ENCODE measurements at regions of chrX and their contacts with region 1.

Region 1: DNA sequence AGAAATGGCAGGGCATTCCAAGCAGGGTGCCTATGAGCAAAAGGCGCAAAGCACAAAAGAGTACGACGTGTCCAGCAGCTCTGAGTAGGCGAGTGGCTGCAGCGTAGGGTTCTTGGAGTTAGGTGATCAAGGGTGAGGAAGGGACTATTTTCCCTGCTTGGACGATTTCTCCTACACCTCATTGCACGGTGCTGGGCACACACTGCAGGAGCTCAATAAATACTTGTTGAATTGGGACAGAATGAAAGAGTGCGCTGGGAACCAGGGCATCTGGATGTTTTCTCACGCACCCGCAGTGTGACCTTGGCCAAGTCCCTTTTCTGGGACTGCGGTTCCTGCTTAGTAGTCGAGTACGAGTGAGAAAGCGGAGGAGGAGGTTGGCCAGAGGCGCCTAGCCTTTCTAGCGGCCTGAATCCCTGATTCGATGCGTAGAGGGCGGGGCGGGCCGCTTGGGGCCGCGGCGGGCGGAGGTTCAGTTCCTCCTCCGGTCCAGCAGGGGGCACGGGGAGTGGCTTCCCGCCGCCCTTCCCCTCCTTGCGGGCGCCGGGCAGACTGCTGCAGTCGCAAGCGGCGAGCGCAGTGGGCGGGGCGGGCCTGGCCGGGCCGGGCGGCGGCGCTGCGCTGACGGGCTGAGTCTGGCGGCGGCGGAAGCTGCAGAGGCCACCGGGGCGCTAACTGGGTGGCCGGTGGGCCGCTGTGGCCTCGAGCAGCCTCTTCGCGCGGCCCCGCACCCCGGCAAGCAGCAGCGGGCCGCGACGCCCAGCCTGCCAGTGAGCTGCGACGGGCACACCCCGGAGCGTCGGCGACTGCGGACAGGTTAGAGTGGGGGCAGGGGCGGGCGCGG is at the start of gene FAM199X:
- DNase-seq: peak; percentile 89
- H3K4me3 ChIP-seq: peak within 1 kb of the TSS; percentile 67
- H3K27ac ChIP-seq: peak within 1 kb of the TSS; percentile 74
- H3K4me1 ChIP-seq: no peaks in the 10 kb centered on the region
- H3K27me3 ChIP-seq: no peaks in the 10 kb centered on the region
- CTCF ChIP-seq: peak; percentile 54
- total RNA-seq, gene FAM199X: 14.3 and 15.5 TPM in 2 replicates

Region 2: DNA sequence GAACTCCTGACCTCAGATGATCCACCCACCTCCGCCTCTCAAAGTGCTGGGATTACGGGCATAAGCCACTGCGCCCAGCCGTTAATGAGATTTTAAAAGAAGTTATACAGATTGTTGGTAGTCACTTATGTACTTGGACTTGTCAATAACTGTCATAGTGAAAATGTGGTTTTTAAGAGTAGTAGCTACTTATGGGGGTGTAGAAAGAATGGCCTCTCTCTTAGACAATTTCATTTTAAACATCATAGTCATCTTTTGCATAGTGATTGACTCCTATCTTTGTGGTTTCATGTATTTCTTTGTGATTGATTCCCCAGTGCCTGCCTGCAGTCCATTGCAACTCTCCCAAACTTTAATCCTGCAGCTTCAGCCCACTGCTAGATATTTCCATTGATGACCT is 17.6 kb after region 1 on chrX:
- CTCF ChIA-PET with region 1: no interaction called
- POLR2A ChIA-PET with region 1: interaction called, 15 read pairs
- intact Hi-C with region 1: no loop called
- DNase-seq: no peak
- H3K4me3 ChIP-seq: no peak overlapping the region
- H3K27ac ChIP-seq: no peak overlapping the region
- H3K4me1 ChIP-seq: no peaks in the 10 kb centered on the region
- H3K27me3 ChIP-seq: peaks cover 3% of the 10 kb centered on the region
- CTCF ChIP-seq: no peak

Region 3: GRCh38 chrX:104391906-104392305 is 225.8 kb after region 1 on chrX:
- CTCF ChIA-PET with region 1: no interaction called
- POLR2A ChIA-PET with region 1: no interaction called
- intact Hi-C with region 1: no loop called
- DNase-seq: no peak
- H3K4me3 ChIP-seq: no peak overlapping the region
- H3K27ac ChIP-seq: no peak overlapping the region
- H3K4me1 ChIP-seq: no peaks in the 10 kb centered on the region
- H3K27me3 ChIP-seq: peaks cover 11% of the 10 kb centered on the region
- CTCF ChIP-seq: no peak